ENCODE measurements at regions of chr20 and their contacts with region 1.

Region 1: DNA sequence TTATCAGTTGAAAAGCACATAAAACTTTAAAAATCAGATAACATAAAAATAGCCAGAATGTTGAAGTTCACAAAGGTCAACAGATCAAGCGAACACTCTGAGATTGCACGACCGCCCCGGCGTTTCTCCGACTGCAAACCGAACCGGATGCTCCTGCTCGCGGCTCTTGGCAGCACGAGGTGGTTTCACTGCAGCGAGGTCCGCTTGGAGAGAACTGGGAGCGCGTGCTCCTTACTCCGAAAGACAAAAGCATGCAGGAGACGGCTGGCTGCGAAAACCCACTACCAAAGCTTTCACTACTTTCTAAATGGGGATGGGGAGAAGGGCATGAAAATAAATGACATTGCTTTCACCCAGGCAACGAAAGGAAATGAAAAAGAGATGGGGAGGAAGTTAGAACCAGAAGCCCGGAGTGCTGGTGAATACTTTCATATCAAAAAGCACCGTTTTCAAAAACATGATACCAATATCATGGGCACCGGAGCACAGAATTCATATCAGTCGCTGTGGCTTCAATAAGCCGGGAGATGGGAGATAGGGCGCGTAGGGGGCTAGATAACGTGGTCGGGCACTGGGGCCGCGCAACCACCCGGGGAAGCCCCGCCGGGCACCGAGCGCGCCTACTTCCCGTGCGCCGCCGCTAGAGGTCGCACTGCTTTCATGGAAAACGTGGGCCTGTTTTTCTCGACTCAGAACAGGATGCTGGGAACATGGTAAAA is 8.3 kb upstream of the ANKRD60 start:
- DNase-seq: peak; percentile 64 to 70
- H3K4me3 ChIP-seq: peak overlapping the region in 1 of 3 donors; percentile 18
- H3K27ac ChIP-seq: no peak overlapping the region
- H3K4me1 ChIP-seq: no peaks in the 10 kb centered on the region
- H3K27me3 ChIP-seq: no peaks in the 10 kb centered on the region
- CTCF ChIP-seq: peak; percentile 79 to 94 (median 91)
- POLR2A ChIP-seq: no peak

Region 2: GRCh38 chr20:57600320-57601210 is 636.2 kb before region 1 on chr20:
- intact Hi-C with region 1: no loop called
- DNase-seq: no peak
- H3K4me3 ChIP-seq: no peak overlapping the region
- H3K27ac ChIP-seq: no peak overlapping the region
- H3K4me1 ChIP-seq: peaks cover 0 to 7% of the 10 kb centered on the region in 2 donors
- H3K27me3 ChIP-seq: no peaks in the 10 kb centered on the region
- CTCF ChIP-seq: no peak
- POLR2A ChIP-seq: no peak

Region 3: GRCh38 chr20:58447511-58448391 is 211.0 kb after region 1 on chr20:
- intact Hi-C with region 1: loop called (anchors 5 kb)
- DNase-seq: peak; percentile 65 to 74
- H3K4me3 ChIP-seq: no peak overlapping the region
- H3K27ac ChIP-seq: peak overlapping the region in 1 of 3 donors; percentile 47
- H3K4me1 ChIP-seq: peaks cover 11 to 31% of the 10 kb centered on the region in 2 donors
- H3K27me3 ChIP-seq: no peaks in the 10 kb centered on the region
- CTCF ChIP-seq: peak in 5 of 6 experiments; percentile 33 to 69 (median 66)
- POLR2A ChIP-seq: no peak

Region 4: GRCh38 chr20:58692594-58693226 is 455.9 kb after region 1 on chr20 and contains the start of gene NPEPL1:
- intact Hi-C with region 1: loop called (anchors 5 kb)
- DNase-seq: peak; percentile 67 to 74
- H3K4me3 ChIP-seq: peak within 1 kb of the TSS in 1 of 3 donors; percentile 58
- H3K27ac ChIP-seq: peak within 1 kb of the TSS; percentile 90 to 93 (median 92)
- H3K4me1 ChIP-seq: peaks cover 9 to 37% of the 10 kb centered on the region in 2 donors
- H3K27me3 ChIP-seq: no peaks in the 10 kb centered on the region
- CTCF ChIP-seq: peak in 3 of 6 experiments; percentile 40 to 52 (median 50)
- POLR2A ChIP-seq: peak in 1 of 2 donors; percentile 47
- total RNA-seq, gene NPEPL1: 41.6 to 56.0 (median 47.2) TPM

Region 5: GRCh38 chr20:58839991-58840759 is 603.4 kb after region 1 on chr20:
- intact Hi-C with region 1: loop called (anchors 10 kb)
- DNase-seq: no peak
- H3K4me3 ChIP-seq: no peak overlapping the region
- H3K27ac ChIP-seq: no peak overlapping the region
- H3K4me1 ChIP-seq: no peaks in the 10 kb centered on the region
- H3K27me3 ChIP-seq: no peaks in the 10 kb centered on the region
- CTCF ChIP-seq: no peak
- POLR2A ChIP-seq: no peak

Measured in thyroid gland (tissue), 4 donors.